ENCODE measurements at regions of chr17 and their contacts with region 1.

Region 1: DNA sequence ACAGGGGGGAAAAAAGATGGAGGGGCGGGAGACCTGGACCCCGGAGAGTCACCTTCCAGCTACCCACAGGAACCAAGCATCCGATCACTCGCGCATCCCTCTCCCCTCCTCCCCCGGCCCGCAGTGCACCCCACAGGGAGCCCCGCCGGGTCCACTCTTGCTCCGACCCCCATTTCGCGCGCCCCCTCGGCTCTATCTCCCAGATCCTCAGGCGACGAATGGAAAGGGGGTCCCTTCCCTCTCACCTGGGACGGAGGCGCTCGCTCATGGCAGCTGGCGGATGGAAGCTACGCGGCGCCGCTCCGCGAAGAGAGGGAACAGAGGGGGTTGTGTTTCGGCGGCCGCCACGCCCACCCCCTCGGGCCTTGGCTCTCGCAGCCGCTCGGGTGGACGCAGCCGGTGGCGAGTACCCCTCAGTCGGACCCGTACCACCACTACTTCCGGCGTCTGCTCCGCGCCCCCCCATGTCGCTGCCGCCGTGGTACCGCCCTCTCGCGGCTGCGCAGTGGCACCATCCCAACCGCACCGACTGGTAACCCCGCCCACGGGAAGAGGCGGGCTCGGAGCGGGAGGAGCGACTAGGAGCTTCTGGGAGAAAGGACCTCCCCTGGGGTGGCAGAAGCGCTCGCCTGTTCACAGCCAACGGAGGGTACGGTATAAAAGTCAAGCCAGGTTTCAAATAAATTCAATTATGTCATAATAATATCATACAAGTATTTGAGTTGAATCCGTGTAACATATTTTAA is 29.7 kb downstream of the CPSF4L start:
- DNase-seq: peak; percentile 98
- ATAC-seq: peak; percentile 83
- H3K4me3 ChIP-seq: peak overlapping the region; percentile 80
- H3K27ac ChIP-seq: peak overlapping the region; percentile 39
- H3K4me1 ChIP-seq: peaks cover 41% of the 10 kb centered on the region
- H3K27me3 ChIP-seq: no peaks in the 10 kb centered on the region
- CTCF ChIP-seq: no peak

Region 2: GRCh38 chr17:72097144-72097543 is 1134.9 kb before region 1 on chr17:
- CTCF ChIA-PET with region 1: interaction called, 10 read pairs
- POLR2A ChIA-PET with region 1: no interaction called
- intact Hi-C with region 1: no loop called
- DNase-seq: peak; percentile 99
- ATAC-seq: peak; percentile 98
- H3K4me3 ChIP-seq: peak overlapping the region; percentile 3; the same call in 1 of the 2 replicates
- H3K27ac ChIP-seq: peak overlapping the region; percentile 65
- H3K4me1 ChIP-seq: peaks cover 18% of the 10 kb centered on the region
- H3K27me3 ChIP-seq: no peaks in the 10 kb centered on the region
- CTCF ChIP-seq: no peak

Region 3: DNA sequence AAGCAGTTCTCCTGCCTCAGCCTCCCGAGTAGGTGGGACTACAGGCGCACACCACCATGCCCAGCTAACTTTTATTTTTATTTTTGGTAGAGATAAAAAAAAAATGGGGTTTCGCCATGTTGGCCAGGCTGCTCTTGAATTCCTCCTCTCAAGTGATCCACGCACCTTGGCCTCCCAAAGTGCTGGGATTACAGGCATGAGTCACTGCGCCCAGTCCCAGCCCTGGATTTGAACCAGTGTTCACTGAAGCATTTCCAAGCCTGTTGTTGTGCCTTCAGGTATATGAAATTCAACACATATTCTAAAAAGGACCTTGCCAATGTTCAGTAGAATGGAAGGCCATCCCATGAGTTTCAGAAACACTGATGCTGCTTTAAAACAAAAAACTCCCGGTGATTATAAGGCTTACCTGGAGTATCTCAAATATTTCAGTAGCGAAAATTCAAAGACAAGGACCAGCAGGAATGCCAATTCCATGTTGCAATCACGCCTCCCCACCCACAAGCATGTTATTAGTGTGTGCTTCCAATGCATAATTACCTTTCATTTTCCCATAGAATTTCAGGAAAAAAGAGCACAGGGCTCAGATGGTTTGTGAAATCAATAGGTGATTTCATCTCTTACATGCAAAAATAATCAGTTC is 304.7 kb before region 1 on chr17:
- CTCF ChIA-PET with region 1: no interaction called
- POLR2A ChIA-PET with region 1: interaction called, 20 read pairs
- intact Hi-C with region 1: no loop called
- DNase-seq: no peak
- ATAC-seq: no peak
- H3K4me3 ChIP-seq: no peak overlapping the region
- H3K27ac ChIP-seq: no peak overlapping the region
- H3K4me1 ChIP-seq: no peaks in the 10 kb centered on the region
- H3K27me3 ChIP-seq: no peaks in the 10 kb centered on the region
- CTCF ChIP-seq: no peak

Region 4: GRCh38 chr17:73107191-73107590 is 124.8 kb before region 1 on chr17:
- CTCF ChIA-PET with region 1: no interaction called
- POLR2A ChIA-PET with region 1: no interaction called
- intact Hi-C with region 1: no loop called
- DNase-seq: no peak
- ATAC-seq: peak; percentile 35; the same call in 1 of the 2 replicates
- H3K4me3 ChIP-seq: no peak overlapping the region
- H3K27ac ChIP-seq: no peak overlapping the region
- H3K4me1 ChIP-seq: no peaks in the 10 kb centered on the region
- H3K27me3 ChIP-seq: no peaks in the 10 kb centered on the region
- CTCF ChIP-seq: no peak

Region 5: GRCh38 chr17:73199751-73200317 is 32.2 kb before region 1 on chr17:
- CTCF ChIA-PET with region 1: no interaction called
- POLR2A ChIA-PET with region 1: no interaction called
- intact Hi-C with region 1: no loop called
- DNase-seq: no peak
- ATAC-seq: no peak
- H3K4me3 ChIP-seq: no peak overlapping the region
- H3K27ac ChIP-seq: no peak overlapping the region
- H3K4me1 ChIP-seq: peaks cover 9% of the 10 kb centered on the region
- H3K27me3 ChIP-seq: no peaks in the 10 kb centered on the region
- CTCF ChIP-seq: no peak

Region 6: GRCh38 chr17:73311781-73312641 is 80.0 kb after region 1 on chr17 and contains the start of gene CDC42EP4:
- CTCF ChIA-PET with region 1: interaction called, 6 read pairs
- POLR2A ChIA-PET with region 1: interaction called, 5 read pairs
- intact Hi-C with region 1: loop called (anchors 1 kb)
- DNase-seq: peak; percentile 98
- ATAC-seq: peak; percentile 81
- H3K4me3 ChIP-seq: peak within 1 kb of the TSS; percentile 94
- H3K27ac ChIP-seq: peak within 1 kb of the TSS; percentile 82
- H3K4me1 ChIP-seq: peaks cover 35% of the 10 kb centered on the region
- H3K27me3 ChIP-seq: no peaks in the 10 kb centered on the region
- CTCF ChIP-seq: no peak
- total RNA-seq, gene CDC42EP4: 83.1 and 109 TPM in 2 replicates

Measured in PC-3 (cell line).